Activated CD4-positive, alpha-beta T cell treated with anti-CD3 and anti-CD28 coated beads, Interleukin-2, amount 10 ng/mL, durations not matched to agents 24 days and 14 days (primary cell): ENCODE measurements at regions of chr6 and their contacts with region 1.

Region 1: GRCh38 chr6:129498950-129499842 is 210.8 kb downstream of the ARHGAP18 start:
- DNase-seq: peak; percentile 80
- H3K4me3 Mint-ChIP-seq: peak overlapping the region; percentile 39
- H3K27ac Mint-ChIP-seq: peak overlapping the region; percentile 43
- H3K4me1 Mint-ChIP-seq: peaks cover 58% of the 10 kb centered on the region
- H3K27me3 Mint-ChIP-seq: no peaks in the 10 kb centered on the region

Region 2: GRCh38 chr6:129162605-129163004 is 336.6 kb before region 1 on chr6:
- intact Hi-C with region 1: no loop called
- DNase-seq: no peak
- H3K4me3 Mint-ChIP-seq: no peak overlapping the region
- H3K27ac Mint-ChIP-seq: no peak overlapping the region
- H3K4me1 Mint-ChIP-seq: no peaks in the 10 kb centered on the region
- H3K27me3 Mint-ChIP-seq: no peaks in the 10 kb centered on the region

Region 3: GRCh38 chr6:129345890-129346289 is 153.3 kb before region 1 on chr6:
- intact Hi-C with region 1: no loop called
- DNase-seq: no peak
- H3K4me3 Mint-ChIP-seq: no peak overlapping the region
- H3K27ac Mint-ChIP-seq: no peak overlapping the region
- H3K4me1 Mint-ChIP-seq: no peaks in the 10 kb centered on the region
- H3K27me3 Mint-ChIP-seq: peaks cover 16% of the 10 kb centered on the region

Region 4: GRCh38 chr6:129567374-129567773 is 68.2 kb after region 1 on chr6:
- intact Hi-C with region 1: loop called (anchors 1 kb)
- DNase-seq: peak; percentile 77
- H3K4me3 Mint-ChIP-seq: no peak overlapping the region
- H3K27ac Mint-ChIP-seq: no peak overlapping the region
- H3K4me1 Mint-ChIP-seq: no peaks in the 10 kb centered on the region
- H3K27me3 Mint-ChIP-seq: peaks cover 6% of the 10 kb centered on the region

Region 5: DNA sequence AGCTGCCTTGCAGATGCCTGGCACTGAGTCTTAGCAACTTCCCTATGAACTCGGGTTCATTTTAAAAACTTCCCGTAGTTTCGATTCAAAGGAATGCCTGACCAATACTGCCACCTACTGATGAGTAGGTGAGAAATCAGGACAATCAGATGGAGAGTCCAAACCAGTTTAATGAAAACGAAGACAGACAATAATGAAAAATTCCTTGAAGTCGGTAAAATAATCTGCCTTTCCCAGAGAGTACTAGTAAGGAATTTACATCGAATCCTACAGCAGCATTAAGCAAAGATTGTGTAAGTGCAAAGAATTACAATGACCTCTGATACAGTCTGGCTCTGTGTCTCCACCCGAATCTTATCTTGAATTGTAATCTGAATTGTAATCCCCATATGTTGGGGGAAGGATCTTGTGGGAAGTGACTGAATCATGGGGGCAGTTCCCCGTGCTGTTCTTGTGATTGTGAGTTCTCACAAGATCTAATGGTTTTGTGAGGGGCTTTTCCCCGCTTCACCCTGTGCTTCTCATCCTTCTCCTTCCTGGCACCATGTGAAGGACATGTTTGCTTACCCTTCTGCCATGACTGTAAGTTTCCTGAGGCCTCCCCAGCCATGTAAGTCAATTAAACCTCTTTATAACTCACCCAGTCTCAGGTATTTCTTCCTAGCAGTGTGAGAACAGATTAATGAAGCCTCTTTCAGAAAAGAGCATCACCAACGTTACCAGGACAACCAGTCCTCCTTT is 76.4 kb after region 1 on chr6:
- intact Hi-C with region 1: loop called (anchors 2 kb)
- DNase-seq: no peak
- H3K4me3 Mint-ChIP-seq: no peak overlapping the region
- H3K27ac Mint-ChIP-seq: no peak overlapping the region
- H3K4me1 Mint-ChIP-seq: peaks cover 3% of the 10 kb centered on the region
- H3K27me3 Mint-ChIP-seq: peaks cover 5% of the 10 kb centered on the region

Region 6: DNA sequence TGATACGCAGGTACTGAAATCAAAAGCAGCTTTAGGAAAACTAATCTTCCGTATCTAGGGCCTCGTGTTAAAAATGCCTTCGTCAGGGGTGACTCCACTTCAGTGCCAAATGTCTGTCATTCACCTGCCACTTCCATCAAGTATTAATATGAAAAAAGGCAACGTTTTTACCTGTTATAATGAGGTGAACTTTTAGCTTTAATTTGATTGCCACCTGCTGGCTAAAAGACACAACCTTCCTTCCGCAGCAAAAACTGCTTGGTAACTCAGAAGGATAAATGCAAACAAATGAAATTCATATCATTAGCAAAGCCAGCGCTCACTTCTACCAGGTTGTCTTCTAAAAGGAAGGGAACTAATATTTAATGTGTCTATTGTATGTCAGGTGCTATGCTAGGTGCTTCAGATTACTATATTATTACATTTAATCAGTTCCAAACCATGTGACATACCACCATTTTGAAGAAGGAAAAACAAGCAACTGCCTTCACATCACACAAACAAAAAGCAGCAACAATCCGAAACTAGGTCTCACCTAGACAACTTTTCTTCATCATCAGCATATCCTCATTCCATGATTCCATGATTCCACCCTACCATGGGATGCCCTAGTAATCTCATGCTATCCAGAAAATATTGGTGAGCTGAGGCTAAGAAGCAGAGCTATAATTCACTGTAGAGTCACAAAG is 231.4 kb after region 1 on chr6:
- intact Hi-C with region 1: loop called (anchors 5 kb)
- DNase-seq: peak; percentile 80
- H3K4me3 Mint-ChIP-seq: no peak overlapping the region
- H3K27ac Mint-ChIP-seq: no peak overlapping the region
- H3K4me1 Mint-ChIP-seq: peaks cover 12% of the 10 kb centered on the region
- H3K27me3 Mint-ChIP-seq: no peaks in the 10 kb centered on the region

Region 7: GRCh38 chr6:129936329-129937165 is 437.4 kb after region 1 on chr6:
- intact Hi-C with region 1: loop called (anchors 10 kb)
- DNase-seq: peak; percentile 78
- H3K4me3 Mint-ChIP-seq: no peak overlapping the region
- H3K27ac Mint-ChIP-seq: no peak overlapping the region
- H3K4me1 Mint-ChIP-seq: no peaks in the 10 kb centered on the region
- H3K27me3 Mint-ChIP-seq: peaks cover 30% of the 10 kb centered on the region

Region 8: GRCh38 chr6:130132286-130132701 is 633.1 kb after region 1 on chr6:
- intact Hi-C with region 1: loop called (anchors 10 kb)
- DNase-seq: peak; percentile 92
- H3K4me3 Mint-ChIP-seq: peak overlapping the region; percentile 66
- H3K27ac Mint-ChIP-seq: peak overlapping the region; percentile 93
- H3K4me1 Mint-ChIP-seq: peaks cover 62% of the 10 kb centered on the region
- H3K27me3 Mint-ChIP-seq: no peaks in the 10 kb centered on the region